ENCODE measurements at regions of chr4 and their contacts with region 1.

Region 1: DNA sequence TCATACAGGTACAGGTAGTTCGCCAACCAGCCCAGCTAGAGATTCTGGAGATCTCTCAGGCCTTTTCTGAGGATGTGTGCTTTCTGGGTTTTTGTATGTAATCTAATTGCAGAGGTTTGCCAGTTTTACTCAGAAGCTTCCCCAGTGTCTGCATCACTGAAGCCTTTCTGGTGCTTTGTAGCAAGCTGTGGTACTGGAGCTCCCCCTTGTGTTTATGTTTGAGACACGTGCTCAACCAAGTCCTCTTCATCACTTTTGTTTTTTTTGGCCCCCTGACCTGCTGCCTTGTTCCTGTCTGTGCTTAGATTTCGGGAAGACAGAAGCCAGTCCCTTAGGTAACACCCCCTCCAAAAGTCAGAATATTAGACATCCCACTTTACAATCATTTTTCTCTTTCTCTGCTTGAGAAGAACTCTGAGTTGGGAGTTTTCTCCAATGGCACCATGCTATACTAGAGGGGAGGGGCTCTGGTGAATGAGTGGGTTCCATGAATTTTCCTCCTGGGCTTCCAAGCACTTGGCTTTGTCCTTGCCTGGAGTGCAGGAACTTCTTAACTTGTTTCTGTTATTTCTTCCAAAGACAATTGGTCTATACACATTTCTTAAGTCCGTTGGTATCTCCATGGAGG is 128.4 kb upstream of the TBC1D9 start:
- DNase-seq: peak; percentile 24
- ATAC-seq: peak; percentile 86 to 88

Region 2: GRCh38 chr4:140497747-140498636 is 386.6 kb before region 1 on chr4 and contains the start of gene MGAT4D:
- intact Hi-C with region 1: no loop called
- DNase-seq: no peak
- ATAC-seq: peak; percentile 47 to 63
- total RNA-seq, gene MGAT4D: not detected

Region 3: DNA sequence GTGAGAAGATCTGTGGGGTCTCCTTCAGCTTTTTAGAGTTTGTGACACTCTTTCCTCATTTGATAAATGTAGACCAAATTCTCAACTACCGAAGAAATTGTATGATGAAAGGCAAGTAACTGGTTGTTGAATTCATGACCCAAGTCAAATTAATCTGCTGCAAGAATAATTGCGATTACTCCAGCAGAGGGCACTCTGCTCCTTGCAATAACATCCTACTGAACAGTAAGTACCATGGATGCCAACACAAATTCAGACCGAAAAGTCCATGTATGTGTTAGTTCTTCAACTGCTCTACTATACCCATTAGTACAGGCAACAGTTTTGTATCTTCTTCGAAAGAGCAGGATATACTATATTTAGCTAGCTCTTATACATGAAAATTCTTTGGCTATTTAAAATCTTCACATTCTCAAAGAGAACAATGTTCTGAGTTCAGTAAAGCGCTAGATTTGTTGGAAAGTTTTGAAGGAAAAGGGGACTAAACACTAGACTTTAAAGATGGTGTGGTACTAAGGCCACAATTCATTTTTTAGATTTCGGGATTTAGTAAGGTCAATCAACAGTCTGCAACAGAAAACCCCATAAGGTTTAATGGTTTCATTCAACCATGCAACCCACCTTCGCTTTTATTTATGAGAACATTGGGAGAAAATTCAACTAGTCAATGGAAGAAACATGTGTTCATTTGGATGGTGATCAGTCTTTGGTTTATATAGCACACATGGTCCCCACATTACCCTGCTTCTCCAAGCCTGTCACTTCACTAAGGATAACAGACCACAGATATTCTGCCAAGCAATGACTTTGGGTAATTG is 23.0 kb before region 1 on chr4:
- intact Hi-C with region 1: loop called in 1 of 2 experiments (anchors 2 kb)
- DNase-seq: peak; percentile 50
- ATAC-seq: peak; percentile 60 to 84

Region 4: DNA sequence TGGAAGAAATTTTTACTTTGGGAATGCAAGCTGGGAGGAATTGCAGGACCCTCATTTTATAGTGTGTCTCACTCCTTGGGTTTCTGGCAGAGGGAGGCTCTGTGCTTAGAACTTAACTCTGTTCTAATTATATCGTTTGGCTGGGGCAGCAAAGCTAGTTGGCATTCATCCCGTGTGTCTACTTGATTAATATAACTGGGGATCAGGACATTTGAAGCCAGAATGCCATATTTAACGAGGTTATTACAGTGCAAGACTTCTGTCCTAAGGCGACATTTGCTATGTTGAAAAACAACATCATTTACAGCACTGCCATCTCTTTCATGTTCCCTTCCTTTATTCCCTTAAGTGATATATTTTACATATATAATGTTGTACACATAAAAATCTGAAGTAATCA is 50.7 kb after region 1 on chr4:
- intact Hi-C with region 1: loop called in 1 of 2 experiments (anchors 10 kb)
- DNase-seq: peak; percentile 26
- ATAC-seq: peak; percentile 53 to 81

Region 5: GRCh38 chr4:140982613-140983340 is 98.2 kb after region 1 on chr4:
- intact Hi-C with region 1: loop called in 1 of 2 experiments (anchors 5 kb)
- DNase-seq: no peak
- ATAC-seq: peak in 1 of 2 donors; percentile 82

Region 6: DNA sequence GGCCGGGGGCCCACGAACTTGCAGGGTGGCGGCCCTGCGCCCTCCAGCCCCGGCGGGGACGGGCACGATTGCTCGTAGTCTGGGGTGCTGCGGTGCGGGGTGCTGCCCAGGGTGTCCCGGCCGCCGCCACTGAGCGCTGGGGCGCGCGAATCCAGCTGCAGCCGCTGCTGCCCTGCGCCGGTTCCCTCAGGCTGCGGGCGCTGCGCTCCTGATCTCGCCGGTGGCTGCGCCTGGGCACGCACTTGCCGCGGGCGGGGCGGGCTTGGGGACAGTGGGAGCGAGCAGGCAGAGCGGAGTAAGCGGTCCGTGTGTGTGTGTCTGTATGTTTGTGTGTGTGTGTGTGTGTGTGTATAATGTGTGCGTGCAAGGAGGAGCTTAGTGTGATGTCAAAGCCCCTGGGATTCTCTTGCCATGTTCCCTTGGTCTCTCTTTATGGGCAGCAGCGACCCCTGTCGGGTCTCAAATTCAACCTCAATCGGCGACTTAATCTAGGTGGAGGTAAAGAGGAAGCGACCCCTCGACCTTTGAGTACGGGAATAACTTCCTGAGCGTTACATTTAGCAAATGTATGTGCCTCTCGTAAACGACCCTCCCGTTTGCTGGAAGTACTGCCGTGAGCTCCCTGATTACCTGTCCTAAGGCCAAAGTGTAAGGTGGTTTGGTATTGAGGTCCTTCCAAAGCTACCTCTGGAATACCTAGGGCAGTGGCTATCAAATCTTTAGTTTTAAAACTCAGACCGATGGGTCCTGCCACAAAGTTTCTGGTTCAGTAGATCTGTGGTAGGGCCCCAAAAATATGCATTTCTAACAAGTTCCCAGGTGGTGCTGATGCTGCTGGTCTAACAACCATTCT is 248.8 kb after region 1 on chr4 and contains the start of gene RNF150:
- intact Hi-C with region 1: loop called in 1 of 2 experiments (anchors 5 kb)
- DNase-seq: peak; percentile 77
- ATAC-seq: peak; percentile 86 to 89
- total RNA-seq, gene RNF150: 38.4 to 40.0 TPM

Measured in left cardiac atrium (tissue), 4 donors.